K562 (cell line): ENCODE measurements at regions of chr15 and their contacts with region 1.

Region 1: GRCh38 chr15:72155635-72156616 is 37.7 kb downstream of the SENP8 start:
- DNase-seq: peak; percentile 69 to 85 (median 71)
- ATAC-seq: peak; percentile 98
- H3K4me3 ChIP-seq: no peak overlapping the region
- H3K27ac ChIP-seq: no peak overlapping the region
- H3K4me1 ChIP-seq: no peaks in the 10 kb centered on the region; a peak in 1 of 5 replicates
- H3K27me3 ChIP-seq: peaks cover 10 to 29% of the 10 kb centered on the region in 2 experiments; a peak in 4 of 5 replicates
- CTCF ChIP-seq: peak; percentile 85 to 96 (median 93)
- EP300 ChIP-seq: no peak
- POLR2A ChIP-seq: no peak
- RAD21 ChIP-seq: peak; percentile 82 to 96

Region 2: DNA sequence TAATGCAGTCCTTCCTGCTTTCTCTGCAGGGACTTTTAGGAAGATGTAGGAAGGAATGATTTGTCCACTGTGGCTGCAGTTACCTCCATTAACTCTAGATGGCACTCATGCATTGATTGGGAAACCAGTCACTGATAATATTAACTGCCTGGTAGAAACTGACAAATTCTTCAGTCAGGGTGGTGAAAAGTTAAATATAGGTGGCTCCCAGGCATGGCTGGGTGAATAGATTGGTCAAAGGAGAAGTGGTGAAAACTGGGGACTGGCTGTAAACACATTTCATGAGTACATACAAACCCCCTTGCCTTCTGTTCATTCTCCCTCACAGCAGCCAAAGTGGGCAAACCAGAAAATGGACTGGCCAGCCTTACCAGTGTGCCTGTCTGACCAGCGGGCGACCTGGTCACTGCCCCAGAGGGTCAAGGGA is 707.2 kb before region 1 on chr15:
- CTCF ChIA-PET with region 1: no interaction called
- POLR2A ChIA-PET with region 1: no interaction called
- in situ Hi-C with region 1: no loop called
- intact Hi-C with region 1: loop called (anchors 10 kb)
- DNase-seq: peak; percentile 19 to 42 (median 29)
- ATAC-seq: no peak
- H3K4me3 ChIP-seq: no peak overlapping the region
- H3K27ac ChIP-seq: no peak overlapping the region
- H3K4me1 ChIP-seq: no peaks in the 10 kb centered on the region
- H3K27me3 ChIP-seq: no peaks in the 10 kb centered on the region; a peak in 1 of 5 replicates
- CTCF ChIP-seq: peak; percentile 54 to 75 (median 71); a peak in 5 of 6 replicates
- EP300 ChIP-seq: no peak
- POLR2A ChIP-seq: no peak
- RAD21 ChIP-seq: peak; percentile 61 to 66

Region 3: DNA sequence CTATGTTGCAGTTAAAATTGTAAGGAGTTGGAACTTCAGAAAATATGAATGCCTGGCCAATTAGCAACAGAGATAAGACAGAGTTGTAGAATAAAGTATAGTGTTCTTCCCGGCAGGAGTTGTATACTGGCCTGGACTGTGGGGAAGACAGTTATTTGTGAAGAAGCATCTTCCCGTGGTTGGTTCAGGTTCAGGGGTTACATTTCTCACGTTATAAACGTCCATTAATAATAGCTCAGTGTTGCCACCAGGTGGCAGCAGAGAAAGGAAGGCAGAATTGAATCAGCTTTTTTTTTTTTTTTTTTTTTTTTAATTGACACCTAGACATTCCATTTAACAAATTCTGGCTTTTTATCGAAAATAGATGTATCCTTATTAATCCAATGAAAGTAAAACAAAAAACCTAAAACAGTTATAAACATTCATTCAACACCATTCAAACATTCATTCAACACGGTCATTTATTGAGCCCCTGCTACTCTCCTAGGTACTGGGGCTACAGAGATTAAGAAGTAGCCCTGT is 412.0 kb before region 1 on chr15:
- CTCF ChIA-PET with region 1: interaction called, 17 read pairs
- POLR2A ChIA-PET with region 1: interaction called, 4 read pairs
- in situ Hi-C with region 1: no loop called
- intact Hi-C with region 1: loop called (anchors 2 kb)
- DNase-seq: peak; percentile 45 to 66 (median 56)
- ATAC-seq: peak; percentile 77
- H3K4me3 ChIP-seq: no peak overlapping the region
- H3K27ac ChIP-seq: no peak overlapping the region
- H3K4me1 ChIP-seq: no peaks in the 10 kb centered on the region
- H3K27me3 ChIP-seq: peaks cover 15 to 41% of the 10 kb centered on the region in 2 experiments; a peak in 4 of 5 replicates
- CTCF ChIP-seq: peak; percentile 54 to 74 (median 61); a peak in 5 of 6 replicates
- EP300 ChIP-seq: no peak
- POLR2A ChIP-seq: no peak
- RAD21 ChIP-seq: peak; percentile 29 to 32

Region 4: GRCh38 chr15:71800835-71801745 is 354.8 kb before region 1 on chr15:
- CTCF ChIA-PET with region 1: interaction called, 14 read pairs
- POLR2A ChIA-PET with region 1: interaction called, 3 read pairs
- in situ Hi-C with region 1: loop called (anchors 5 kb)
- intact Hi-C with region 1: loop called (anchors 1 kb)
- DNase-seq: peak; percentile 46 to 57 (median 54)
- ATAC-seq: peak; percentile 87
- H3K4me3 ChIP-seq: no peak overlapping the region
- H3K27ac ChIP-seq: no peak overlapping the region
- H3K4me1 ChIP-seq: peaks cover 0 to 8% of the 10 kb centered on the region in 2 experiments; a peak in 2 of 5 replicates
- H3K27me3 ChIP-seq: peaks cover 3 to 25% of the 10 kb centered on the region in 2 experiments; a peak in 2 of 5 replicates
- CTCF ChIP-seq: peak; percentile 61 to 88 (median 74)
- EP300 ChIP-seq: no peak
- POLR2A ChIP-seq: no peak
- RAD21 ChIP-seq: peak; percentile 75 to 83

Region 5: DNA sequence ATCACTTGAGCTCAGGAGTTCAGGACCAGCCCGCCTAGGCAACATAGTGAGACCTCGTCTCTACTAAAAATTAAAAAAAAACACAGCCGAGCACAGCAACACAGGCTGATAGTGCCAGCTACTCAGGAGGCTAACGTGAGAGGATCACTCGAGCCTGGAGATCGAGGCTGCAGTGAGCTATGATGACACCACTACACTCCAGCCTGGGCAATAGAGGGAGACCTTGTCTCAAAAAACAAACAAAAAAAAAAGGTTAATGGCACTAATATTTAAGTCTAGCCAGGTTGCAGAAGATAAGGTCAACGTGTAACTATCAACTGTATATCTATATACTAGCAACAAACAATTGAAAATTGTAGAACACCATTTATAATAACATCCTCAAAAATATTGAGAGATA is 113.1 kb before region 1 on chr15:
- CTCF ChIA-PET with region 1: no interaction called
- POLR2A ChIA-PET with region 1: no interaction called
- in situ Hi-C with region 1: no loop called
- intact Hi-C with region 1: loop called (anchors 5 kb)
- DNase-seq: peak in 1 of 4 experiments; percentile 5
- ATAC-seq: no peak
- H3K4me3 ChIP-seq: no peak overlapping the region
- H3K27ac ChIP-seq: no peak overlapping the region
- H3K4me1 ChIP-seq: no peaks in the 10 kb centered on the region
- H3K27me3 ChIP-seq: no peaks in the 10 kb centered on the region
- CTCF ChIP-seq: 0 out of 6 replicates have a peak, but pooled peaks of 1 of the 3 experiments have one; percentile 14
- EP300 ChIP-seq: no peak
- POLR2A ChIP-seq: no peak
- RAD21 ChIP-seq: no peak; a peak in 1 of 4 replicates